ENCODE measurements at regions of chr2 and their contacts with region 1.

Region 1: DNA sequence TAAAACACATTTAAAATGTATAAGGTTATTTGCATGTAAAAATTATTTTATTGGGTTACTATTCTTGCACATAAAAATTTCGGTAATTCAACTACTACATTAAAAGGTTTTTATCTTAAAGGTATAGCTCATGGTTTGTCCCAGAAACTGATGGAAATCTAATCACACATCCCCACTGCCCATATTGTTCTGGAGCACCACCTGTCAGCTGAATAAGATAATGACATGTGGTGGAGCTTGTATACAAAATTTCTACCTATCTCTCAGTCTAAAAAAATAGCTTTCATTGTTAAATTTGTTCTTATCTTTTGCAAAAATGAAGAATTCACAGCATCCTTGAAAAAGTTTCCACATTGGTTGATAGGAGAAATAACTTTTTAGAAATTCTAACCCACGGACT is 18.3 kb downstream of the ERBB4 start:
- DNase-seq: no peak
- ATAC-seq: no peak
- H3K4me3 ChIP-seq: no peak overlapping the region
- H3K4me1 ChIP-seq: no peaks in the 10 kb centered on the region
- CTCF ChIP-seq: no peak

Region 2: DNA sequence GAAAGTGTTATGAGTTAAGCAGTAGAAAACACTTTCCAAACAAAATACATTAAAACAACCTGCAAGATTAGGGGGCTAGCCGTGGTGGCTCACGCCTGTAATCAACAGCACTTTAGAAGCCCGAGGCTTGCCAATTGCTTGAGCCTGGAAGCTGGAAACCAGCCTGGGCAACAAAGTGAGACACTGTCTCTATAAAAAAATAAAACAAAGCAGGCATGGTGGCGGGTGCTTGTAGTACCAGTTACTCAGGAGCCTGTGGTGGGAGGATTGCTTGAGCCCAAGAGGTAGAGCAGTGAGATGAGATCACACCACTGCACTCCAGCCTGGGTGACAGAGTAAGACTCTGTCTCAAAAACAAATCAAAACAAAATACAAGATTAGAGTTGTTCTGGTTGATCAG is 190.1 kb before region 1 on chr2:
- intact Hi-C with region 1: loop called in 1 of 2 experiments (anchors 10 kb)
- DNase-seq: no peak
- ATAC-seq: no peak
- H3K4me3 ChIP-seq: no peak overlapping the region
- H3K4me1 ChIP-seq: no peaks in the 10 kb centered on the region
- CTCF ChIP-seq: no peak

Region 3: GRCh38 chr2:212409560-212409959 is 110.8 kb before region 1 on chr2:
- intact Hi-C with region 1: no loop called
- DNase-seq: no peak
- ATAC-seq: no peak
- H3K4me3 ChIP-seq: no peak overlapping the region
- H3K4me1 ChIP-seq: no peaks in the 10 kb centered on the region
- CTCF ChIP-seq: no peak

Region 4: DNA sequence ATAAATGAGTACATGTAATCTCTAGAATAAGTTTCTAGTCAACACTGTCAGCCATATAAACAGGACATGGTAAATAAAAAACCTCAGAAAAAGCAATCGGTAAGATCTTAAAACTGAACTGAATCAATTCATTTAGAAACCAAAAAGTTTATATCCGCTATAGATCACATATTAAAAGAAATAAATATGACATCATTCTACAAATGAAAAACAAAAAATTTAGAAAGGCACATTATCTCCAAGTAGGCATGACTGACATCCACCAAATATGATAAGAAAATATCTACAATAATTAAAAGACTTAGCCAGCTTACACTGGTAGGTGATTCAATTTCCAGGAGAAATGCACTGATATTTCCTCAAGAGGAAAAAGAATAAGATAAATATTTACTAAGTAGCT is 84.2 kb before region 1 on chr2:
- intact Hi-C with region 1: no loop called
- DNase-seq: no peak
- ATAC-seq: no peak
- H3K4me3 ChIP-seq: no peak overlapping the region
- H3K4me1 ChIP-seq: no peaks in the 10 kb centered on the region
- CTCF ChIP-seq: no peak